A549 (cell line): ENCODE measurements at regions of chr17 and their contacts with region 1.

Region 1: GRCh38 chr17:50478391-50479381 is at the start of gene RSAD1:
- DNase-seq: peak; percentile 85 to 96
- ATAC-seq: peak; percentile 78 to 89
- H3K4me3 ChIP-seq: peak within 1 kb of the TSS; percentile 65
- H3K27ac ChIP-seq: peak within 1 kb of the TSS; percentile 79 to 91
- H3K4me1 ChIP-seq: peaks cover 31% of the 10 kb centered on the region
- CTCF ChIP-seq: peak; percentile 100
- EP300 ChIP-seq: no peak
- POLR2A ChIP-seq: peak; percentile 90
- RAD21 ChIP-seq: peak; percentile 41 to 78
- polyA plus RNA-seq, gene RSAD1: 38.2 and 47.2 TPM in 2 replicates

Region 2: DNA sequence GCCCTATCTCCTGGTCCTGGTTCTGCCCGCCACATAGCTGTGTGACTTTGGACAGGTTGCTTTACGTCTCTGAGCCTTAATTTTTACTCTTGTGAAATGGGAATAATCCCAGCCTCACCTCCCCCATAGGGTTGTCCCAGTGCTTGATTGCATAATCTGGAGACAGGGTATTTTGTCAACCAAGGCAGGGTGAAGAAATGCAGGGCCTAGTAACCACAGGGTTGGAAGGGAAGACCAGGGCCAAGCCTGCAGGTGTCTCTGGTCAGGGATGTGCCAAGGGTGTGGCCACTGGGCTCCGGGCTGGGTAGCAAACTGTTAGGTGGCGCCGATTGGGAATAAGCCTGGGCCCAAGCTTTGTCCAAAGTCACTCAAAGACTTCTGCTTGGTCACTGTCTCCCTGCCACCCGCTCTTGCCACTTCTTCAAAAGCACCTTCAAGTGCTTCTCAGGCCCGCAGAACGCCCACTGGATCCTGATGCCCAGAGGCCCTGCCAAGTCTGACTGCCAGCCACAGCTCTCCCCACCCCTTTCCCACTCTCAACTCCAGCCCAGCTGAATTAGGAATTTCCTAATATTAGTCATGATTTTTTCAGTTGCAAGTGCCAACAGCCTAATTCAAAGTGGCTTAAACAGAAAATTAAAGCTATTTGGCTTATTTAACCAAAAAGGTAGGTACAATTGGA is 256.7 kb before region 1 on chr17:
- CTCF ChIA-PET with region 1: no interaction called
- POLR2A ChIA-PET with region 1: no interaction called
- DNase-seq: no peak
- ATAC-seq: no peak
- H3K4me3 ChIP-seq: no peak overlapping the region
- H3K27ac ChIP-seq: peak overlapping the region in 1 of 2 experiments; percentile 87; a peak in 3 of 6 replicates
- H3K4me1 ChIP-seq: peaks cover 43% of the 10 kb centered on the region
- CTCF ChIP-seq: no peak
- EP300 ChIP-seq: no peak
- POLR2A ChIP-seq: no peak
- RAD21 ChIP-seq: no peak

Region 3: GRCh38 chr17:50397111-50397918 is 81.4 kb before region 1 on chr17 and contains the start of gene LRRC59:
- CTCF ChIA-PET with region 1: interaction called, 27 read pairs
- POLR2A ChIA-PET with region 1: interaction called, 6 read pairs
- DNase-seq: peak; percentile 83 to 91
- ATAC-seq: peak; percentile 93 to 95
- H3K4me3 ChIP-seq: peak within 1 kb of the TSS; percentile 88
- H3K27ac ChIP-seq: peak within 1 kb of the TSS; percentile 88 to 94
- H3K4me1 ChIP-seq: peaks cover 20% of the 10 kb centered on the region
- CTCF ChIP-seq: peak; percentile 91
- EP300 ChIP-seq: no peak
- POLR2A ChIP-seq: peak; percentile 91
- RAD21 ChIP-seq: peak; percentile 13 to 47; a peak in 3 of 5 replicates
- polyA plus RNA-seq, gene LRRC59: 228 and 237 TPM in 2 replicates

Region 4: DNA sequence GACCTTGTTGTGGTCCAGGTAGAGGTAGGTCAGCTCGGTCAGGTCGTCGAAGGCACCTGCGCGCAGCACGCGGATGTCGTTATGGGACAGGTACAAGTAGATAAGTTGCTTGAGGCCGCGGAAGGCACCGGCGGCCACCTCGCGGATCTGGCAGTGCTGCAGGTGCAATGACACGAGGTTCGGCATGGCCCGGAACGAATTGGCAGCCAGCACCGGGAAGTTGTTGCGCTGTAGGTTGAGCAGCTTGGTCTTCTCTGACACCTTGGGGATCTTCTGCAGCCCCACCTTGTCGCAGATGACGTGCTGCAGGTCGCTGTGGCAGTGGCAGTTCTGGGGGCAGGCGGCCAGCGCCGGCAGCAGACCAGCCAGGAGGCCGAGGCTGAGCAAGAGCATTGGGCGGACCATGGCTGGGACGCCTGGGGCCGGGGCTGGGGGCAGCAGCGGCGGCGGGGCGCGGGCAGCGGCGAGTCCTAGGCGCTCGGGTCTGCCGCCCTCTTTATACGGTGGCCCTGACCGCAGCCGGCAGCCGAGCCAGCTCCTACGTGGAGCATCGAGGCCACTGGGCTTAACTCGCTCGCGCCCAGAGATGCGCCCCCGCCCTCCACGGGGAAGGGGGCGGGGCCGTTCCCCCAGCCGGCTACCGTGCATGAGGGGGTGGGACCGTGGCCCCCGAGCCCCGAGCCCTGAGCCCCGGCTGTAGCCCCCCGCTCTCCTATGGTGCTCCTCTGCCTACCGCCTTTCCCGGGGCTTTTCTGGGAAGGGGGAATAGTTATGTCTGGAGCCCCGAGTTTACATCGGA is 10.1 kb before region 1 on chr17 and contains the start of gene CHAD:
- CTCF ChIA-PET with region 1: interaction called, 238 read pairs
- POLR2A ChIA-PET with region 1: no interaction called
- DNase-seq: no peak
- ATAC-seq: no peak
- H3K4me3 ChIP-seq: no peak within 1 kb of the TSS
- H3K27ac ChIP-seq: no peak within 1 kb of the TSS
- H3K4me1 ChIP-seq: peaks cover 16% of the 10 kb centered on the region
- CTCF ChIP-seq: no peak
- EP300 ChIP-seq: no peak
- POLR2A ChIP-seq: no peak
- RAD21 ChIP-seq: no peak
- polyA plus RNA-seq, gene CHAD: not detected in 2 replicates

Region 5: DNA sequence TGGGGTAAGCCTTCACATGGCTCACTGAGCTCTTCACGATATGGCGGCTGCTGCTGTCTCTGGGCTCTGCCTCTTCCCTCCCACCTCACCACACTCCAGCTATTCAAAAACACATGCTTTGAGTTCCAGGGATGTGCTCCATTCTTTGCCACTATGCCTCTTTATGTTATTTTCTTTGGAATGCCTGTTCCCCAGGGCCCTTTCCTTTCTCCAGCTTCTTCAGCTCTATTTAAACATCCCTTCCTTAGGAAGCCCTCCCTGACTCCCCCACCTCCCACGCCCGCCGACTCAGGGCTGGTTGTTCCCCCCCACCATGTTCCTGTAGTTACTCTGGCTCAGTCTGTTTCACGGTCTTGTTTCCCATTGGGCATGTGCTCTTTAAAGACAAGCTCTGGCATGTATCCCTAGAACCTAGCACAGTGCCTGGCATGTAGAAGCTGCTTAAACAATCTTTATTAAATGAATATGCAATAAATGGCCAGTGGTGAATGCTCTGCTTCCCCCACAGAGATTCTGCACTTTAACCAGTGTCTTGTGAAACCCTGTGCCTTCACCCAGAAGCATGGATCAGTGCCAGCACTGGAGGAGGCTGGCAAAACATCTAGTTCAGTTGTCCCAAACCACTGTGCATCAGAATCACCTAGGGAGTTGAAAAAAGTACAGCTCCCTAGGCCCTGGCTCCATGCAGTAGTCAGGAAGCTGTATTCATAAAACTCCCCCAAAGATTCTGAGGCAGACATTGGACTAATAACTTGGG is 36.4 kb after region 1 on chr17:
- CTCF ChIA-PET with region 1: interaction called, 16 read pairs
- POLR2A ChIA-PET with region 1: no interaction called
- DNase-seq: no peak
- ATAC-seq: no peak
- H3K4me3 ChIP-seq: no peak overlapping the region
- H3K27ac ChIP-seq: 0 out of 6 replicates have a peak overlapping the region, but pooled peaks of 1 of the 2 experiments have one; percentile 19
- H3K4me1 ChIP-seq: peaks cover 12% of the 10 kb centered on the region; the same call in 1 of the 3 replicates
- CTCF ChIP-seq: no peak
- EP300 ChIP-seq: no peak
- POLR2A ChIP-seq: no peak
- RAD21 ChIP-seq: no peak

Region 6: GRCh38 chr17:50626037-50626574 is 147.4 kb after region 1 on chr17:
- CTCF ChIA-PET with region 1: interaction called, 16 read pairs
- POLR2A ChIA-PET with region 1: no interaction called
- DNase-seq: peak; percentile 88
- ATAC-seq: peak; percentile 66 to 84
- H3K4me3 ChIP-seq: no peak overlapping the region
- H3K27ac ChIP-seq: peak overlapping the region; percentile 71 to 83
- H3K4me1 ChIP-seq: peaks cover 54% of the 10 kb centered on the region
- CTCF ChIP-seq: peak; percentile 76
- EP300 ChIP-seq: no peak
- POLR2A ChIP-seq: no peak
- RAD21 ChIP-seq: peak; percentile 82 to 88